T-cell (primary cell): ENCODE measurements at regions of chr4 and their contacts with region 1.

Region 1: DNA sequence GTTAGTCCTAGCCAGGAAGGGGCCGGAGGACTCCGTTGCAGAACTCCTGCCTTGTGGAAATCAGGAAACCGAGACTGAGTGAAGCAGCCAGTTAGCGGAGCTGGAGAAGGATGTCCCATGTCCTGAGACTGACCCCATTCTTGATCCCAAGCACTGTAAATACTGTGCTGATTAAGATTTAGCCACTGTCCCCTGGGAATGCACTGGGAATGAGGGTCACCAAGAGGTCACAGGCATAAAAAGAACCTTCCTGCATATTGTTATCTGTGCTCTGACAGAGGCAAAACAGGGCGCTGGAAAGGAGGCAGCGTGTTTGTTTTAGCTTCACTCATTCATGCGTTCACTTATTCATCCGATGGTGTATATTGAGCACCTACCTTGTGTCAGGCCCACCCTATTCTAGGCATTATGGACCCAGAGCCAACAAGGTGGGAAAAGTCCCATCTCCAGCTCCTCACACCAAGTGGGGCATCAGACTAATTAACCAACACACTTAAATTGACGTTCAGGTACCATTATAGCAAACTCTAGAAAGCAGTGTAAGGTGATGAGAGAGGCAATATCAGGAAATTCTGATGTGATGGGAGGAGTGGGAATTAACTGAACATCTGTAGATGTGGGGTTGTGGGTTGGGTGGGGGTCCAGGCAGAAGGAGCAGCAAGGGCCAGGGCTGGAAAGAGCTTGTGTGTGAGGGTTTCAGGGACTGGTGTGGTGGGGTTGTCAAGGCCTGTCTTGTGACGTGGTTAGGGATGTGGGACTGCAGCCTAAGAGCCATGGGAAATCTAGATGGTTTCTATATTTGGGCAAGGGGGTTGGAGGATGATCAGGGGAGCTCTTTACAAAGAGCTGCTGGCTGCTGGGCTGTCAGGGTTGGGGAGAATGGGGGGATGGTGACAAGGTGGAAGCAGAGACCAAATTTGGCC is 10.6 kb upstream of the SLC2A9 start:
- DNase-seq: no peak
- ATAC-seq: no peak
- H3K4me3 ChIP-seq: no peak overlapping the region
- H3K4me3 Mint-ChIP-seq: no peak overlapping the region
- H3K27ac ChIP-seq: no peak overlapping the region
- H3K27ac Mint-ChIP-seq: no peak overlapping the region
- H3K4me1 ChIP-seq: no peaks in the 10 kb centered on the region
- H3K4me1 Mint-ChIP-seq: peaks cover 2 to 11% (median 8%) of the 10 kb centered on the region in 3 donors
- H3K27me3 ChIP-seq: peaks cover 0 to 23% of the 10 kb centered on the region in 2 experiments
- H3K27me3 Mint-ChIP-seq: peaks cover 0 to 16% of the 10 kb centered on the region in 2 donors

Region 2: DNA sequence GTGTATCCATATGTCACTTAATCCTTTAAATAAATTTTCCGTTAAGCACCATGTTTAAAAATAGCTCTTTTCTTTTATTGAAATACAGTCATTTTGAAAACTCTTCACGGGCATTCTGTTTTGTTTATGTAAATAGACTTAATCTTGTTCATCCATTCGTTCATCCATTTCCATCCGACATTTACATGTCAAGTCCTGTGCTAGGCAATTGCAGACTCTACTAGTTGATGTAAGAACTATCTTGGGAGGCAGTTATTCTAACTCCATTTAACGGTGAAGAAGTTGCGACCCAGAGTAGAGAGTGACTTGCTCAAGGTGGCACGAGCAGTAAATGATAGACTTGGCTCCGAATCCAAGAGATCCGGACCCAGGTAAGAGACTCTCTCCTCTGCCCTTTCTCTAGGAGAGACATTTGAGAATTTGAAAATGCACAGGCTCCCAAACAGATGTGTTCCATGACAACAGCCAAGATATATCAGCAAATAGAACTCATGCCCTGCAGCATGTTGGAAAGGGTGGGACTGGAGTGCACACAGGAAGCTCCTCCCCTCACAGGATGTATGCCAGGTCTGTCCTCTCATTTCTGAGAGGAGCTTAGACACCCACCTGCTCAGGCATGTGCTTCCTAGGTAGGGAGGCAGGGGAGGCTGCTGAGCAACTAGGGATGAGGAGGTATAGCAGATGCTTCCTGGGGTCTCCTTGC is 186.0 kb before region 1 on chr4:
- CTCF ChIA-PET with region 1: no interaction called
- POLR2A ChIA-PET with region 1: interaction called in 1 of 2 experiments, 10 read pairs
- DNase-seq: no peak
- ATAC-seq: no peak
- H3K4me3 ChIP-seq: no peak overlapping the region
- H3K4me3 Mint-ChIP-seq: no peak overlapping the region
- H3K27ac ChIP-seq: no peak overlapping the region
- H3K27ac Mint-ChIP-seq: no peak overlapping the region
- H3K4me1 ChIP-seq: no peaks in the 10 kb centered on the region
- H3K4me1 Mint-ChIP-seq: no peaks in the 10 kb centered on the region
- H3K27me3 ChIP-seq: peaks cover 0 to 12% of the 10 kb centered on the region in 2 experiments
- H3K27me3 Mint-ChIP-seq: peaks cover 5 to 22% of the 10 kb centered on the region in 2 donors

Region 3: GRCh38 chr4:10013722-10014121 is 18.2 kb before region 1 on chr4:
- CTCF ChIA-PET with region 1: no interaction called
- POLR2A ChIA-PET with region 1: no interaction called
- DNase-seq: peak in 9 of 35 experiments; percentile 6 to 26 (median 12)
- ATAC-seq: no peak
- H3K4me3 ChIP-seq: no peak overlapping the region
- H3K4me3 Mint-ChIP-seq: no peak overlapping the region
- H3K27ac ChIP-seq: no peak overlapping the region
- H3K27ac Mint-ChIP-seq: no peak overlapping the region
- H3K4me1 ChIP-seq: peaks cover 0 to 5% of the 10 kb centered on the region in 2 experiments
- H3K4me1 Mint-ChIP-seq: peaks cover 2 to 7% (median 3%) of the 10 kb centered on the region in 3 donors
- H3K27me3 ChIP-seq: no peaks in the 10 kb centered on the region
- H3K27me3 Mint-ChIP-seq: no peaks in the 10 kb centered on the region

Region 4: DNA sequence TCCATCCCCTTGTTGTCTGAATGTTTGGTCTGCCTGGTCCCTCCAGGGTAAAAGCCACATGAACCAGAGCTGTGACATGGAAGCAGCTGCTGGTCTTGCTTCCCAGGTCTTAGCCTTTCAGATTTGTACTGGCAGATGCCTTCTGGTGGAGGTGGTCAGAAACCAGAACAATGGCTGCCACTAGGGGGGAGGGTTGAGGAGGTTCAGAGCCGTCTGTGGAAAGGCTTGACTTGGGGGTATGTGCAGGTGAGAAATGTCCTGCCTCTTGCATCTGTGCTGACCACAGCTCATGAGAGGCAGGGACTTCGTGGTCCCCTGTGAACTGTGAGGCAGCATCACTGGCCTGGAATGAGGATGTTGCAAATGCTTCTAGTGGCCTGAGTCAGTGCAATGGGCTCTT is 228.8 kb after region 1 on chr4:
- CTCF ChIA-PET with region 1: no interaction called
- POLR2A ChIA-PET with region 1: no interaction called
- DNase-seq: no peak
- ATAC-seq: no peak
- H3K4me3 ChIP-seq: no peak overlapping the region
- H3K4me3 Mint-ChIP-seq: no peak overlapping the region
- H3K27ac ChIP-seq: no peak overlapping the region
- H3K27ac Mint-ChIP-seq: no peak overlapping the region
- H3K4me1 ChIP-seq: no peaks in the 10 kb centered on the region
- H3K4me1 Mint-ChIP-seq: no peaks in the 10 kb centered on the region
- H3K27me3 ChIP-seq: peaks cover 0 to 7% of the 10 kb centered on the region in 2 experiments
- H3K27me3 Mint-ChIP-seq: peaks cover 0 to 8% of the 10 kb centered on the region in 2 donors